ENCODE measurements at regions of chr1 and their contacts with region 1.

Region 1: DNA sequence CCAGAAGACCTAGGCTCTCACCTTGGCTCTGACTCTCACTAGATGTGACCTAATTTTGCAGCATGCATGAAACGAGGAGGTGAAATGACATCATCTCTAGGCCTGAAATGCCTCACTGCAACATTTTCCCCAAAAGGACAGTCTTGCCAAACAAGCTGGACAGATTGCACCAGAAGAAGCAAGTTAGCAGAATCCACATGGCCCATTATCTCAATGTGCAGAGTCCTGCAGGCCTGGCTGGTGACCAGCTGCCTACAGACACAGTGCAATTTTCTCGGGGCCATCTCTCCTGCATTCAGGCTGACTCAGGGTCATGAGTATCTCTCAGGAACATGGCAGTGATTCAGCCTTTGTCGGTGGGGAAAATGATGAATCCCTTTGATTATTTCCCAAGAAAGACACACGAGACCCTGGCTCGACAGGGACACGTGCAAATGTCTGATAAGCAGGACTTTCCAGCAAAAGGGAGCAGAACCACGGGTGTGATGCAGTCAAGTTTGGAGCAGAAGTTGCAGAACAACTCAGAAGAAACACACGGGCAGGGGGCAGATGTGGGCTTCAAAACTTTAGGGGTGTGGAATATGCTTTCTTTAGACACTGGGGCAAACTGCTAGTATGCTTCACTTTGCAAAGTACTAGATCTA is 38.7 kb downstream of the TRIM67 start:
- ATAC-seq: peak in 7 of 8 experiments; percentile 51 to 93 (median 90)
- H3K4me3 ChIP-seq: no peak overlapping the region
- H3K27ac ChIP-seq: no peak overlapping the region
- H3K4me1 ChIP-seq: no peaks in the 10 kb centered on the region

Region 2: DNA sequence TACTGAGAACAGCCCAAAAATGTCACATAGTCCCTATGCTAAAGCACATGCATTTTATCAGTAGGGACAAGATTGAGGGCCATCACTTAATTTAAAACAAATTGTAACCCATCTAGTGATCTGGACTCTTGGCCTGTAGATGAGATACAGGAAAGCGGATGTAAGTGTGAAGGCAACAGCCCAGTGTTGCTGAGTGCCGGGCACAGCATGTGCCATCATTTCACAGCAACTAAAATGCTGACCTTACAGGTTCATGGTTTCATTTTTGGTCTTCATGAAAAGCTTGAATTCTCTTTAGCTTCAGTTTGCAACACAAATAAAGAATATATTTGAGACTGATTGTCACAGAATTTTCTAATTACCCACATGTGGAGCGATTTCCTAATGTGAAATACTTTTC is 552.4 kb before region 1 on chr1:
- in situ Hi-C with region 1: no loop called
- ATAC-seq: no peak
- H3K4me3 ChIP-seq: no peak overlapping the region
- H3K27ac ChIP-seq: no peak overlapping the region
- H3K4me1 ChIP-seq: peaks cover 5 to 11% of the 10 kb centered on the region in 2 donors

Region 3: GRCh38 chr1:230917284-230918135 is 283.0 kb before region 1 on chr1:
- in situ Hi-C with region 1: loop called in 3 of 9 experiments (anchors 10 to 25 kb)
- ATAC-seq: peak; percentile 64 to 83 (median 79)
- H3K4me3 ChIP-seq: no peak overlapping the region
- H3K27ac ChIP-seq: no peak overlapping the region
- H3K4me1 ChIP-seq: peaks cover 0 to 7% of the 10 kb centered on the region in 2 donors